GM12878 (cell line): ENCODE measurements at regions of chr1 and their contacts with region 1.

Region 1: DNA sequence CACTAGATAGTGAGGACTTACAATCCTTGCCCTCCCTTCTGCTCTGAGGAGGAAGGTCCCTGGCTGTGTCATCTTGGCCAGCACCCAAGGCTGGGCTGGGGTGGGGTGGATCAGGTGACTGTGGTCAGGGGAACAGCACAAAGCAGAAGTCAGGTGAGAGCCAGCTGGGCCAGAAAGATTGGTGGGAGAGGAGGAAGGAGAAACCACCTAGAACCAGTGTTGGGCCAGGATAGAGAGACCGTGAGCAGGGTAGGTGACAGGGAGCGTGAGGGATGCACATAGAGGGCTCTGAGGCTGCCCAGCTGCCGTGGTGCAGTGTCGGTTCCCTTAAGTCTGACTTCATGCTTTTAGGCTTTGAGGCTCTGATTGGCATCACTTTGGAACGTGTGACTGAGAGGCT is 22.7 kb downstream of the NCF2 start:
- DNase-seq: peak; percentile 17
- ATAC-seq: peak; percentile 80
- H3K4me3 ChIP-seq: no peak overlapping the region
- H3K27ac ChIP-seq: no peak overlapping the region
- H3K4me1 ChIP-seq: peaks cover 9% of the 10 kb centered on the region
- H3K27me3 ChIP-seq: no peaks in the 10 kb centered on the region
- CTCF ChIP-seq: no peak
- EP300 ChIP-seq: no peak
- POLR2A ChIP-seq: no peak
- RAD21 ChIP-seq: no peak

Region 2: GRCh38 chr1:183551904-183552303 is 15.7 kb before region 1 on chr1:
- CTCF ChIA-PET with region 1: interaction called, 8 read pairs
- POLR2A ChIA-PET with region 1: interaction called, 3 read pairs
- RAD21 ChIA-PET with region 1: no interaction called
- SMC1A ChIA-PET with region 1: interaction called, 10 read pairs
- in situ Hi-C with region 1: no loop called
- intact Hi-C with region 1: no loop called
- DNase-seq: no peak
- ATAC-seq: no peak
- H3K4me3 ChIP-seq: no peak overlapping the region
- H3K27ac ChIP-seq: no peak overlapping the region
- H3K4me1 ChIP-seq: no peaks in the 10 kb centered on the region; the same call in 1 of the 2 replicates
- H3K27me3 ChIP-seq: no peaks in the 10 kb centered on the region
- CTCF ChIP-seq: no peak
- EP300 ChIP-seq: no peak
- POLR2A ChIP-seq: no peak
- RAD21 ChIP-seq: no peak